GM18951 (cell line): ENCODE measurements at regions of chr2 and their contacts with region 1.

Region 1: DNA sequence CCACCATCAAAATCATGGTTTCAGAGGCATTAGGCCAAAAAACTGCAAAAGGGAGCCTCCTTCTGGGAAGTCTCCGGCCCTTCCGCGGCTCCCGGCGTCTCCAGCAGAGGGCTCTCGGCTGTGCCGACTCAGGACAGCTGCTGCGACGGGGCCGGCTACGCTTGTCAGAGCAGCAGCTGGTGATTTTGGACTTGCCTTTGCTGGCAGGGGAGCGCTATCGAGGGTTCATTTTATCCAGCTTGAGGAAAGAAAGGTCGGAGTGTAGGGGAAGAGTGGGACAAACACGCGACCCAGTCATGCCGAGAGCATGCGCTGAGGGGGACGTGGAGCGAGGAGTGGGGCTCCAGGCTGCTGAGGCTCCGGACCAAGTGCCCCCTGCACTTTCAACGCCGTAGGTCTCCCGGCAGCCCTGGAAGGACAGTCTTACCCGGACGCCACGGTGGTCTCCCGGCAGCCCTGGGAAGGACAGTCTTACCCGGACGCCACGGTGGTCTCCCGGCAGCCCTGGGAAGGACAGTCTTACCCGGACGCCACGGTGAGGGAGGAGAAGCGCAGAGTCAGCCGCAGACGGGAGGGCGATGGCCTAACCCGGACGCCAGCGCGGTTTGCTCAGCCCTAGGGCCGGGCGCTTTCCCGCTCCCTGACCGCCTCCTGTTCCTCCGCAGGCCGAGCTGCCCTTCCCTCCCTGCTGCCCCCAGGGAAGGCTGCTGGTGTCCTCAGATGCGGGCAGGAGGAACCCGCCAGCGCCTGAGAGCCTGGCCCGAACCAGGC is 21.7 kb downstream of the DDX18 start:
- POLR2A ChIP-seq: no peak

Region 2: DNA sequence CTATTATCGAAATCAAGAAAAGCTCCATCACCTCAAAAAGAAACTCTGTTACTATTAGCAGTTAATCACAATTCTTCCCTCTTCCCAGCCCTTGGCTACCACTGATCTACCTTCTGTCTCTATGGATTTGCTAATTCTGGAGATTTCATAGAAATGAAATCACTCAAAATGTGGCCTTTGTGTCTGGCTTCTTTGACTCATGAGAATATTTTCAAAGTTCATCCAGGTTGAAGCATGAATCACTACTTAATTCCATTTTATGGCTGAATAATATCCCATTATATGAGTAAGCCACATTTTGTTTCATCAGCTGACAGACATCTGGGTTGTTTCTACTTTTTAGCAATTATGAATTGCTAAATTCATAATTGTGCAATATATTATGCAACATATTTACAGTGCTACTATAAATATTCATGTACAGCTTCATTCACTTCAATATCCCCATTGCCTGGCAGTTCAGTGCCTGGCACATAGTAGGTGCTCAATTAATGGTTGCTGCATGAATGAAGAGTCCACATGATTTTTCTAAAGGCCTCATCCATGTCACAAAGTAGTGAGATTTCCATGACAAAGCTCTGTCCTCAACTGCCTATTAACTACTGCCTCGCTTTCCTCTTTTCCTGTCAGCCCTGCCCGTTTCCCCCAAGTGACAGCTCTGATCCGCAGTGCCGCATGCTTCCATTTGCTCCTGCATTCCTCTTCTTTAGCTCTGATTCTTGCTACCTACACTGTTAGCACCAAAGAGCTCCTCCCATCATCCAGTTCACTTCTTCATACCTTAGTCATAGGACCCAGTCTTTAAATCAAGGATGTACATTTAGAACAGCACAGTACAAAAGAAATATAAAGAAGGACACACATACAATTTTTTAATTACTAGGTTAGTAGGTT is 144.9 kb after region 1 on chr2:
- in situ Hi-C with region 1: no loop called
- POLR2A ChIP-seq: no peak

Region 3: GRCh38 chr2:118003396-118003824 is 167.2 kb after region 1 on chr2:
- in situ Hi-C with region 1: loop called (anchors 25 kb)
- POLR2A ChIP-seq: no peak